Activated B cell treated with CpG ODN at 0.5 μM for 24 hours (primary cell): ENCODE measurements at regions of chr3 and their contacts with region 1.

Region 1: GRCh38 chr3:185253645-185254410 is at the start of gene EHHADH:
- DNase-seq: peak; percentile 24
- ATAC-seq: peak; percentile 83
- H3K4me3 Mint-ChIP-seq: peak within 1 kb of the TSS; percentile 79
- H3K27ac Mint-ChIP-seq: no peak within 1 kb of the TSS
- H3K4me1 Mint-ChIP-seq: peaks cover 3% of the 10 kb centered on the region
- H3K27me3 Mint-ChIP-seq: peaks cover 24% of the 10 kb centered on the region
- CTCF ChIP-seq: no peak
- total RNA-seq, gene EHHADH: 1.1 and 1.7 TPM in 2 replicates

Region 2: GRCh38 chr3:185297867-185298266 is 44.0 kb after region 1 on chr3:
- CTCF ChIA-PET with region 1: no interaction called
- POLR2A ChIA-PET with region 1: no interaction called
- intact Hi-C with region 1: loop called (anchors 5 kb)
- DNase-seq: no peak
- ATAC-seq: no peak
- H3K4me3 Mint-ChIP-seq: no peak overlapping the region
- H3K27ac Mint-ChIP-seq: no peak overlapping the region
- H3K4me1 Mint-ChIP-seq: peaks cover 13% of the 10 kb centered on the region
- H3K27me3 Mint-ChIP-seq: no peaks in the 10 kb centered on the region
- CTCF ChIP-seq: no peak